Naive thymus-derived CD8-positive, alpha-beta T cell (primary cell): ENCODE measurements at regions of chr19 and their contacts with region 1.

Region 1: DNA sequence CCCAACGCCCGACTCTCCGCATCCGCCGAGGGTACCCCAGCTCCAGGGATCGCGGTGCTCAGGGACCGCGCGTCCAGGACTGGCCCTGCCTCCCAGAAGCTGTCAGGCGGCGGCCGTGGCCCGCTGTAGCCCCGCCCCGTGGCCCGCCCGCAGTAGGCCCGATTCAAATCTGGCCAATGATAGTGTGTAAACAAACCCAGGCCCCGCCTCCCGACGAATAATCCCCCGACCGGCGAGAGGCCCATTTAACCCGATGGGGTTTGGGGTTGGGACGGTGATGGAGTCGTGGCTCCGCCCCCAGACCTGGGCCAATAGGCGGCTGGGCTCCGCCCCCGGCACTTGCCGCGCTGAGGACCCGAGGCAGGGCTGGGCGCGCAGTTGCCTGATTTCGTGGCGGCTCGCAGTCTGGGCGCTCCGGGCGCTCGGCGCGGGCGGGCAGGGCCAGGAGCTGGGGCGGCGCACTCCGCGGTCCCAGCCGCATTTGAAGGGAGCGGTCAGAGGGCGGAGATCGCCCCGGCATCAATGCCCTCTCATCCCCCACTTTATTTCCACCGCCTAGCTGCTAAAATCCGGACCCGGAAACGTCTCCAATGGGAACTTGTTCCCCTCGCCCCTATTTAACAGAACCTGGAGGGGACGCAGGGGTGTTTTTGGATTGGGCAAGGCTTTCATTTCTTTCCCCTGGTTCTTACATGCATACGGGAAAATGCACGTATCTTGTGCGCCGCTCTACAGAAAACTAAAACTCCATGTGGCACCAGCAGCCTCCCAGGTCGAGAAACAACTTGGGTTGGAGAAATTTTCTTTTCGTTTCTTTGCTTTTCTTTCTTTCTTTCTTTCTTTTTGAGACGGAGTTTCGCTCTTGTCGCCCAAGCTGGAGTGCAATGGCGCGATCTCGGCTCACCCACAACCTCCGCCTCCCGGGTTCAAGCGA is 8.4 kb upstream of the BICRA start:
- DNase-seq: peak; percentile 90 to 100 (median 98)
- ATAC-seq: peak; percentile 97
- H3K4me3 Mint-ChIP-seq: peak overlapping the region; percentile 78 to 90 (median 86)
- H3K27ac Mint-ChIP-seq: peak overlapping the region; percentile 53 to 94 (median 90)
- H3K4me1 Mint-ChIP-seq: peaks cover 8 to 27% (median 23%) of the 10 kb centered on the region in 4 donors
- H3K27me3 Mint-ChIP-seq: no peaks in the 10 kb centered on the region

Region 2: GRCh38 chr19:47514869-47515588 is 85.5 kb before region 1 on chr19 and contains the start of gene NAPA:
- POLR2A ChIA-PET with region 1: interaction called, 30 read pairs
- DNase-seq: peak; percentile 99 to 100 (median 100)
- ATAC-seq: peak; percentile 90 to 91
- H3K4me3 Mint-ChIP-seq: peak within 1 kb of the TSS; percentile 95 to 100 (median 98)
- H3K27ac Mint-ChIP-seq: peak within 1 kb of the TSS; percentile 95 to 100 (median 98)
- H3K4me1 Mint-ChIP-seq: peaks cover 54 to 99% (median 95%) of the 10 kb centered on the region in 4 donors
- H3K27me3 Mint-ChIP-seq: no peaks in the 10 kb centered on the region
- polyA plus RNA-seq, gene NAPA: 88.7 to 116 (median 89.6) TPM

Region 3: GRCh38 chr19:47573071-47574026 is 27.2 kb before region 1 on chr19 and contains the start of gene ZNF541:
- POLR2A ChIA-PET with region 1: interaction called, 32 read pairs
- DNase-seq: peak; percentile 76 to 91 (median 88)
- ATAC-seq: peak; percentile 79 to 82
- H3K4me3 Mint-ChIP-seq: peak within 1 kb of the TSS; percentile 64 to 87 (median 75)
- H3K27ac Mint-ChIP-seq: peak within 1 kb of the TSS; percentile 53 to 93 (median 73)
- H3K4me1 Mint-ChIP-seq: peaks cover 18 to 48% (median 38%) of the 10 kb centered on the region in 4 donors
- H3K27me3 Mint-ChIP-seq: no peaks in the 10 kb centered on the region
- polyA plus RNA-seq, gene ZNF541: 0.27 TPM in 1 of 3 donors, not detected in the others

Region 4: GRCh38 chr19:47587295-47587694 is 13.2 kb before region 1 on chr19:
- POLR2A ChIA-PET with region 1: interaction called, 11 read pairs
- DNase-seq: no peak
- ATAC-seq: no peak
- H3K4me3 Mint-ChIP-seq: no peak overlapping the region
- H3K27ac Mint-ChIP-seq: peak overlapping the region in 2 of 10 donors; percentile 15 to 58
- H3K4me1 Mint-ChIP-seq: peaks cover 6 to 12% (median 10%) of the 10 kb centered on the region in 4 donors
- H3K27me3 Mint-ChIP-seq: peaks cover 0 to 15% (median 0%) of the 10 kb centered on the region in 5 donors